Gastrocnemius medialis (tissue), 4 donors: ENCODE measurements at regions of chr13 and their contacts with region 1.

Region 1: DNA sequence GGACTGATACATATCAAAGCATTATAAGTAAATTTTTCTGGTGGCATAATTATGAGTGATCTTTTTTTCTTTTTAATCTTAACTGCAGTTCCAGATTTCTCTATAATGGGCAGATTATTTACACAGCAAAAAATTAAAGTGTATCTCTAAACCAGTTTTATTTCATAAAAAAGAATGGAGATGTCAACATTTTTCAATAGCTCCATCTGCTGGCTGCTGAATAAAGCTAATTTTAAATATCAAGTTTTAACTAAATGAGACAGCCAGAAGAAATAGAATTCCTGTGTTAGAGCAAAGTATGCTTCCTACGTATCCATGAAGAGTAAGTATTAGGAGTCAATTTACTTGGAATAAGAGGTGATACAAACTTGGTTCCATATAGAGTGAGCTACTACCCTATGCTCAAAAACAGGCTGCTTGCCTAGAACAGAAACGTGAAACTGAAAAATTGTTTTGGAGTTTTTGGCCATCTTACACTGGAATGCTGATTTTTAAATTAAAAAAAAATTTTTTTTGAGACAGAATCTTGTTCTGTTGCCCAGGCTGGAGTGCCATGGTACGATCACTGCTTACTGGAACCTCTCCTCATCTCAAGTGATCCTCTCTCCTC is 5.0 kb upstream of the PDS5B start:
- DNase-seq: no peak
- ATAC-seq: no peak
- H3K4me3 ChIP-seq: no peak overlapping the region
- H3K27ac ChIP-seq: no peak overlapping the region
- H3K4me1 ChIP-seq: peaks cover 4% of the 10 kb centered on the region in 2 donors
- H3K27me3 ChIP-seq: no peaks in the 10 kb centered on the region
- CTCF ChIP-seq: peak in 3 of 5 experiments; percentile 7 to 48 (median 40)
- POLR2A ChIP-seq: no peak

Region 2: DNA sequence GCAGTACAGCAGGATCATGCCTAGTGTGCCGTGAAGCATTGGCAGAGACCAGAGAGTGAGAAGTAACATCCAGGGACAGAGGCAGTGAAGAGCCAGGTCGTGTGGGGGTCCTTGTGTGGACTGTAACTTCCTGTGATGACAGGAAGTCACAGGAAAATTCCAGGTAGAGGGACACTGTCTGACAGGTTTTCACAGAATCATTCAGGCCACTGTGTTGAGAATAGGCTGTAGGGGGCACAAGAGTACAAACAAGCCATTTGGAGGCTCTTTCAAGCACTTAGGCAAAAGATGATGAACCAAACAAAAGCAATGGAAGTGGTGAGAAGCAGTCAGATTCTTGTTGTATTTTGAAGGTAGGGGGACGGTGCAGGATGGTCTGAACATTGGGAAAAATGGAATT is 199.7 kb before region 1 on chr13:
- in situ Hi-C with region 1: loop called in 3 of 4 experiments (anchors 5 to 10 kb)
- intact Hi-C with region 1: loop called (anchors 1 kb)
- DNase-seq: no peak
- ATAC-seq: peak; percentile 39 to 45
- H3K4me3 ChIP-seq: no peak overlapping the region
- H3K27ac ChIP-seq: no peak overlapping the region
- H3K4me1 ChIP-seq: no peaks in the 10 kb centered on the region
- H3K27me3 ChIP-seq: no peaks in the 10 kb centered on the region
- CTCF ChIP-seq: peak in 4 of 5 experiments; percentile 19 to 53 (median 37)
- POLR2A ChIP-seq: no peak